Body of pancreas (tissue), 4 donors: ENCODE measurements at regions of chr14 and their contacts with region 1.

Region 1: GRCh38 chr14:63039800-63040380 is 5.4 kb downstream of the KCNH5 start:
- DNase-seq: no peak
- ATAC-seq: no peak
- H3K4me3 ChIP-seq: no peak overlapping the region
- H3K27ac ChIP-seq: no peak overlapping the region
- H3K4me1 ChIP-seq: peaks cover under 1% of the 10 kb centered on the region
- H3K27me3 ChIP-seq: peaks cover 0 to 3% of the 10 kb centered on the region in 2 donors
- CTCF ChIP-seq: peak in 5 of 7 experiments; percentile 6 to 22 (median 20)
- POLR2A ChIP-seq: no peak

Region 2: GRCh38 chr14:62179367-62180018 is 860.4 kb before region 1 on chr14:
- intact Hi-C with region 1: loop called (anchors 10 kb)
- DNase-seq: peak; percentile 69 to 79 (median 72)
- ATAC-seq: peak; percentile 67
- H3K4me3 ChIP-seq: no peak overlapping the region
- H3K27ac ChIP-seq: no peak overlapping the region
- H3K4me1 ChIP-seq: no peaks in the 10 kb centered on the region
- H3K27me3 ChIP-seq: no peaks in the 10 kb centered on the region
- CTCF ChIP-seq: peak; percentile 14 to 73 (median 65)
- POLR2A ChIP-seq: no peak